Activated B cell treated with CpG ODN at 0.5 μM for 24 hours (primary cell): ENCODE measurements at regions of chr13 and their contacts with region 1.

Region 1: GRCh38 chr13:25375727-25376358 is 4.1 kb downstream of the ATP8A2 start:
- DNase-seq: no peak
- ATAC-seq: no peak
- H3K4me3 Mint-ChIP-seq: no peak overlapping the region
- H3K27ac Mint-ChIP-seq: no peak overlapping the region
- H3K4me1 Mint-ChIP-seq: peaks cover 14% of the 10 kb centered on the region
- H3K27me3 Mint-ChIP-seq: peaks cover 41% of the 10 kb centered on the region
- CTCF ChIP-seq: no peak

Region 2: GRCh38 chr13:25137637-25138115 is 238.2 kb before region 1 on chr13:
- CTCF ChIA-PET with region 1: no interaction called
- POLR2A ChIA-PET with region 1: no interaction called
- intact Hi-C with region 1: no loop called
- DNase-seq: no peak
- ATAC-seq: no peak
- H3K4me3 Mint-ChIP-seq: no peak overlapping the region
- H3K27ac Mint-ChIP-seq: no peak overlapping the region
- H3K4me1 Mint-ChIP-seq: no peaks in the 10 kb centered on the region
- H3K27me3 Mint-ChIP-seq: peaks cover 40% of the 10 kb centered on the region
- CTCF ChIP-seq: no peak

Region 3: DNA sequence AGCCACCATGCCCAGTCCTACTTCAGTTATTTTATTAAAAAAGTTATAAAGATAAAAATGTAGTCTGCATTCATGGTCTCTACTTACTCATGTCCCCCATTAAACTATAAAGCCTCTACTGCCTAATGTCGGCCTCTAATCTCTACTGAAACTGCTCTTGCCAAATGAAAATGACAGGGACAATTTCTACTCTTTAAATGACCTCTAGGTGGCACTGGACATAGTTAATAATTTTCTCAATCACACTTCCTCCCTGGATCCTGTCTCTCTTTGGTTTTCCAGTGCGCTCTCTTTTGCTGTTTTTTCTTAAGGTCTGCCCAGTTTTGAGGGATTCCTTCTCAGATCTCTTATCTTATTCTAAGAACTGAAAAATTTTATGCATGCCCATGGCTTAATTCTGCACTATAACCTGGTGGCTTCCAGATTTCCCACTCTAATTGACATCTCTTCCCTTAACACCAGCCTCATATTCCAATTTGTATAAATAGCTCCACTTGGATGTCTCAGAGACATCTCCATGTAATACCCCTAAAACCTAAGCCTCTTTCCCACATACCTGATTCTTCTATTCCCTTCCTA is 142.8 kb before region 1 on chr13:
- CTCF ChIA-PET with region 1: interaction called, 12 read pairs
- POLR2A ChIA-PET with region 1: no interaction called
- intact Hi-C with region 1: no loop called
- DNase-seq: no peak
- ATAC-seq: peak; percentile 54
- H3K4me3 Mint-ChIP-seq: no peak overlapping the region
- H3K27ac Mint-ChIP-seq: no peak overlapping the region
- H3K4me1 Mint-ChIP-seq: peaks cover 19% of the 10 kb centered on the region
- H3K27me3 Mint-ChIP-seq: peaks cover 17% of the 10 kb centered on the region
- CTCF ChIP-seq: no peak

Region 4: GRCh38 chr13:25267715-25268114 is 108.1 kb before region 1 on chr13:
- CTCF ChIA-PET with region 1: no interaction called
- POLR2A ChIA-PET with region 1: no interaction called
- intact Hi-C with region 1: loop called (anchors 1 kb)
- DNase-seq: no peak
- ATAC-seq: peak; percentile 58
- H3K4me3 Mint-ChIP-seq: no peak overlapping the region
- H3K27ac Mint-ChIP-seq: no peak overlapping the region
- H3K4me1 Mint-ChIP-seq: no peaks in the 10 kb centered on the region
- H3K27me3 Mint-ChIP-seq: no peaks in the 10 kb centered on the region
- CTCF ChIP-seq: no peak